HEK293 (cell line): ENCODE measurements at regions of chr17 and their contacts with region 1.

Region 1: GRCh38 chr17:48335858-48336500 is 94.0 kb downstream of the SKAP1 start:
- H3K4me3 ChIP-seq: no peak overlapping the region
- H3K27ac ChIP-seq: no peak overlapping the region
- H3K4me1 ChIP-seq: peaks cover 15% of the 10 kb centered on the region; the same call in 1 of the 2 replicates
- CTCF ChIP-seq: no peak

Region 2: DNA sequence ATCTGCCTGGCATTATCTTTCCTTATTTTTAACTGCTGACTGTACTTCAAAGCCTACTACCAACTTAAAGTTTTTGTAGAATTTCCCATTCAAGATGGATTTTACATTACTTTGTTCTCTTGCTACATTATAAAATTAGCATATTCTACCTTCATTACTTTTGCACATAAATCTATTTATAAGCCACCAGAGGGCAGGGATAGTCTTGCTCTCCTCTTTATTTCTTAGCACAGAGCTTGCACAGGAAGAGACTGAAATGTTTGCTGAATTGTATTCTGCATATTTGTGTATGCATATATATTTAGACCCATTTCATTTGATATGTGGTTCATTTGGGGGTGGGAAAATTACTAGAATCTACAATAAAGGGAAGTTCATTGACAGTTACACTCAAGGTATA is 13.9 kb before region 1 on chr17:
- CTCF ChIA-PET with region 1: interaction called, 21 read pairs
- POLR2A ChIA-PET with region 1: no interaction called
- H3K4me3 ChIP-seq: no peak overlapping the region
- H3K27ac ChIP-seq: no peak overlapping the region
- H3K4me1 ChIP-seq: 0 out of 2 replicates have a peak, but pooled peaks cover 4% of the 10 kb centered on the region
- CTCF ChIP-seq: 0 out of 2 replicates have a peak, but pooled peaks have one; percentile 8

Region 3: GRCh38 chr17:48351831-48352332 is 15.9 kb after region 1 on chr17:
- CTCF ChIA-PET with region 1: interaction called, 37 read pairs
- POLR2A ChIA-PET with region 1: no interaction called
- H3K4me3 ChIP-seq: no peak overlapping the region
- H3K27ac ChIP-seq: no peak overlapping the region
- H3K4me1 ChIP-seq: peaks cover 3% of the 10 kb centered on the region; the same call in 1 of the 2 replicates
- CTCF ChIP-seq: no peak

Region 4: GRCh38 chr17:48429638-48430586 is 93.9 kb after region 1 on chr17 and contains the start of gene SKAP1:
- CTCF ChIA-PET with region 1: no interaction called
- POLR2A ChIA-PET with region 1: no interaction called
- H3K4me3 ChIP-seq: no peak within 1 kb of the TSS
- H3K27ac ChIP-seq: no peak within 1 kb of the TSS
- H3K4me1 ChIP-seq: peaks cover 20% of the 10 kb centered on the region
- CTCF ChIP-seq: no peak

Region 5: GRCh38 chr17:48487221-48487620 is 151.2 kb after region 1 on chr17:
- CTCF ChIA-PET with region 1: no interaction called
- POLR2A ChIA-PET with region 1: no interaction called
- H3K4me3 ChIP-seq: no peak overlapping the region
- H3K27ac ChIP-seq: no peak overlapping the region; the same call in 1 of the 2 replicates
- H3K4me1 ChIP-seq: peaks cover 20% of the 10 kb centered on the region
- CTCF ChIP-seq: no peak

Region 6: DNA sequence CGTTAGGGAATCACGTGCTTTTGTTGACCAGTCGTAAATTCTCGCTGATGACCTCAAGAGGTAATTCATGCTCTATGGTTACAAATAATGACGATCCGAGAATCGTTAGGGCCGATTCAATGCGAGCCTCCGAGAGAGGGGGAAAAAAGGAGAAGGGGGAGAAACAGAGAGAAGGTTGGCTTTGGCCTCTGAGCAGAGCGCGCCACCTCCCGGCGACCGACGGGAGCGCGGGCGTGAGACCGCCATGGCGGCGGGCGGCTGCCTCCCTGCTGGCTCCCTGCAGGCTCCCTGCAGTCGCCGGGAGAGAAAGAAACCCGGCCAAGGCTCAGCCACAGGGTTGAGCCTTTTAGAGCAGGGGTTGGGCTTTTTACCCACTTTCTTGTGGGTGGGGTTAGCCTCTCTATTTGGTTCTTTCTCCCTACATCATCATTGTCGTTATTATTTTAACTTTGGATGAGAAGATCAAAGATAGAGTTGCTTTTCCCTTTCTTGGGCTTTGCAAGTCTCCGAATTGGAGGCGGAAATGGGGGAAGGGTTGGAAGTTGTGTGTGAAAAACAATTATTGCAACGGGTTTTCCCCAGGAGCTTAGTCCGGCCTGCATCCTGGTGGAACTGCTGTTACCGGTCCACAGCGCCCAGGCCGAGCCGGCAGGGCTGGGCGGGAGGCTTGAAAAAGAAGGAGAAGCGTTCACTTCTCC is 258.0 kb after region 1 on chr17:
- CTCF ChIA-PET with region 1: interaction called, 52 read pairs
- POLR2A ChIA-PET with region 1: no interaction called
- H3K4me3 ChIP-seq: no peak overlapping the region; the same call in 1 of the 2 replicates
- H3K27ac ChIP-seq: peak overlapping the region; percentile 68
- H3K4me1 ChIP-seq: peaks cover 31% of the 10 kb centered on the region
- CTCF ChIP-seq: peak; percentile 98

Region 7: GRCh38 chr17:48610282-48611211 is 274.6 kb after region 1 on chr17 and contains the start of gene HOXB7:
- CTCF ChIA-PET with region 1: interaction called, 13 read pairs
- POLR2A ChIA-PET with region 1: interaction called, 4 read pairs
- H3K4me3 ChIP-seq: peak within 1 kb of the TSS; percentile 72
- H3K27ac ChIP-seq: peak within 1 kb of the TSS; percentile 94
- H3K4me1 ChIP-seq: peaks cover 32% of the 10 kb centered on the region
- CTCF ChIP-seq: 0 out of 2 replicates have a peak, but pooled peaks have one; percentile 18

Region 8: DNA sequence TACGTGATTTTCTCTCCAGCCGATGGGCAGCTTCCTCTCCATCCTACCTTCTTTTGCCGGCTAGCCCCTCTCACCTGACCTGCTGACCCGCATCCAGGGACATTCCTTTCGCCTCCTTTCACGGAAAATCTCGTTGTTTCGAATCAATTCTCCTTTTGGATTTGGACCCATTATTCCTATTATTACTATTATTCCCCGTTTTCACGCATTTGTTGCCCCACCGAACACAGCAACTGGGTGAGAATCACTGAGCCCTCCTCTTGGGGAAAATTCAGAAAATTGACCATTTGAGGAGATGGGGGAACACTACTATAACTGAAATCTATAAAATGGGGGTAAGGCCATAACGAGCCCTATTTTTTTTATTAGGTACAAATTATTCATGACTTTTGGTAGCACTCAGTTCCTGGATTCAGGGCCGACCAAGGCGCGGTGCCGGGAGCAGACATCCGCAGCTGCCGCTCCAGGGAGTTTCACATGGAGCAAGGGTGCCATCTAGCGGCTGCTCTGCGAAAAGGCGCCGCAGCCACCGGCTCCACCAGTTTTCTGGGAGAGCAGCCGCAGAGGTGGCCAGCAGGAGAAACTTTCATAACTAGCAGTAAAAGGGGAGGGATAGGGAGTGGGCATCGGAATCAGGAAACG is 282.4 kb after region 1 on chr17:
- CTCF ChIA-PET with region 1: interaction called, 14 read pairs
- POLR2A ChIA-PET with region 1: interaction called, 3 read pairs
- H3K4me3 ChIP-seq: no peak overlapping the region
- H3K27ac ChIP-seq: peak overlapping the region; percentile 44; the same call in 1 of the 2 replicates
- H3K4me1 ChIP-seq: peaks cover 48% of the 10 kb centered on the region
- CTCF ChIP-seq: peak; percentile 96